A673 (cell line): ENCODE measurements at regions of chr2 and their contacts with region 1.

Region 1: DNA sequence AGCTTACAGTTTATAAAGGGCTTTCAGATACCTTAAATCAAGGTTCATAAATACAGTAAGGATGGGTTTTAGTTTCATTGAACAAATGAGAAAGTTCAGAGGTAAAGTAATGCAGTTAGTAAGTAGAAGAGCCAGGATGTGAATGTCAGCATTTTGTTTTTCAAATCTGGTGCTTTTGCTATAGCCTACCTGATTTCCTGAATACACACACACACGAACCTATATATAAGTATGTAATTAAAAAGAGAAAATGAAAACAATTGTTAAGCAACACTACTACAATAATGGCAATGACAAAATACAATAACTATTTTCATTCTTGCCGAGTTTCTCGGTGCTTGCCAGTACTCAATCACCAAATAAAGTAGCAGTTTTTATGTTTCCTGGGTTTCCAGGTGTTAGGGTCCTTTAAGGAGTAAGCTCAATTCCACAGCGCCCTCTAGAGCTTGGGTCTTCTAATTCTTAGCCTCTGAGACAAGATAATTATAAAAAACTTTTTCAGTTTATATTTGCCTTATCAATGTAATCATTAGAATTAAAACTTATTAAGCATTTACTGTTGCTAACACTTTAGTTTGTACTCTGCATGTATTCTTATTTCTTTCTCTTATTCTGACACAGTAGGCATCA is 512.9 kb upstream of the ACVR2A start:
- DNase-seq: peak; percentile 57
- H3K4me3 ChIP-seq: no peak overlapping the region
- H3K27ac ChIP-seq: no peak overlapping the region
- H3K4me1 ChIP-seq: no peaks in the 10 kb centered on the region
- H3K27me3 ChIP-seq: no peaks in the 10 kb centered on the region
- CTCF ChIP-seq: peak; percentile 80

Region 2: GRCh38 chr2:146927080-146927711 is 404.7 kb before region 1 on chr2:
- CTCF ChIA-PET with region 1: no interaction called
- POLR2A ChIA-PET with region 1: no interaction called
- intact Hi-C with region 1: loop called (anchors 10 kb)
- DNase-seq: peak; percentile 73
- H3K4me3 ChIP-seq: no peak overlapping the region
- H3K27ac ChIP-seq: no peak overlapping the region
- H3K4me1 ChIP-seq: no peaks in the 10 kb centered on the region
- H3K27me3 ChIP-seq: no peaks in the 10 kb centered on the region
- CTCF ChIP-seq: peak; percentile 73

Region 3: GRCh38 chr2:146990311-146991054 is 341.4 kb before region 1 on chr2:
- CTCF ChIA-PET with region 1: no interaction called
- POLR2A ChIA-PET with region 1: no interaction called
- intact Hi-C with region 1: no loop called
- DNase-seq: no peak
- H3K4me3 ChIP-seq: no peak overlapping the region
- H3K27ac ChIP-seq: no peak overlapping the region
- H3K4me1 ChIP-seq: peaks cover 31% of the 10 kb centered on the region
- H3K27me3 ChIP-seq: no peaks in the 10 kb centered on the region
- CTCF ChIP-seq: no peak